Posterior cingulate gyrus (tissue), 11 donors: ENCODE measurements at regions of chr5 and their contacts with region 1.

Region 1: GRCh38 chr5:133025804-133026663 is at the start of gene ZCCHC10:
- DNase-seq: peak; percentile 87 to 99 (median 92)

Region 2: GRCh38 chr5:132354381-132355139 is 671.5 kb before region 1 on chr5:
- intact Hi-C with region 1: no loop called
- DNase-seq: no peak

Region 3: GRCh38 chr5:133051580-133052332 is 25.7 kb after region 1 on chr5 and contains the start of gene HSPA4:
- intact Hi-C with region 1: loop called (anchors 1 kb)
- DNase-seq: peak; percentile 97 to 100 (median 99)